Activated CD4-positive, alpha-beta T cell treated with anti-CD3 and anti-CD28 coated beads, Interleukin-2, amount 10 ng/mL, durations not matched to agents 24 days and 14 days (primary cell): ENCODE measurements at regions of chr1 and their contacts with region 1.

Region 1: DNA sequence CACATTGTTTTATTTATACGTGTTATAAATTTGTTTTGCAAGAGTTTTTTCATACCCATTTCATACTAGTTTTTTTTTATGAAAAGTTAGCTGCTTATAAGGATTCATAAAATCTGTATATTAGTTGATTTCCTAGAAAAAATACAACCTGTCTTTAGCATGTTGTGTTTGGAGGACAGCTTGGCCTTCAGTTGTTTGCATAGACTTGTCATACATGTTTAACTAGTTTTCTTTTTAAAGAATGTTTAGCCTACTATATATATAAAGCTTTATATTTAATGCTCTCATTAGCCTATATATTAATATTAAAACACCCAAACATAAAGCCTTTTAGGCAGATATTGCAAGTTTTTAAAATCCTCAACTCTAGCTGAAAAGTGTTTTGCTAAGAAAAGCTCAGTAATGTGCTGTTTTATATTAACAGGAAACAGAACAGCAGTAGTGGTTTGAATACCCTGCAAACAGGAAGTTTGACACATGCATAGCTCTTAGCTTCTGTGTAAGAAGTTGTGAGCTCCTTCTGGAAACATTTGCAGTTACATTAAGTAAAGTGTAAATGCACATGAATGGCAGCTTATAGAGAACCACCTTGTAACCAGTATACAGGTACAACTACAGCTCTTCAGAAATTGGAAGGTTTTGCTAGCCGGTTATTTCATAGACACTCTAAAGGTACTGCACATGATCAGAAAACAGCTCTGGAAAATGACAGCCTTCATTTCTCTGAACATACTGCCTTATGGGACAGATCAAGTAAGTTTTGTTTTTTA is at the start of gene PRKACB:
- DNase-seq: peak; percentile 82
- H3K4me3 Mint-ChIP-seq: peak within 1 kb of the TSS; percentile 85
- H3K27ac Mint-ChIP-seq: peak within 1 kb of the TSS; percentile 98
- H3K4me1 Mint-ChIP-seq: peaks cover 23% of the 10 kb centered on the region
- H3K27me3 Mint-ChIP-seq: no peaks in the 10 kb centered on the region
- total RNA-seq, gene PRKACB: 19.1 and 19.3 TPM in 2 replicates

Region 2: DNA sequence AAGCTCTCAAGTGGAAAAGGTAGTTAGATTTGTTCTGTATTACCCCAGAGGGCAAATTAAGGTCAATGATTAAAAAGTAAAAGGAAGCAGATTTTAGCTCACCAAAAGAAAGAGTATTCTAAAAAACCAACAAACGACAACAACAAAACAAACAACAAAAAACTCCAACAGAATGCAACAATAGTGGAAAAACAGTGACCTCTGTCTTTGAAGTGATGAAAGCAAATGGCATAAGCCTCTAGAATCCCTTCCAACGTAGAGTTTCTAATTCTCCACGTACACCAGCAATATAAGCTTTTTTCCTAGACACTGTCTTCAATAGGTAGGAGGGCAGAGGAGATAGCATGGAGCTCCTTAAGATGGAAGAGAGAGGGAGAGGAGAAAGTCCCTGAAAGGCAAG is 504.2 kb before region 1 on chr1:
- intact Hi-C with region 1: no loop called
- DNase-seq: no peak
- H3K4me3 Mint-ChIP-seq: no peak overlapping the region
- H3K27ac Mint-ChIP-seq: no peak overlapping the region
- H3K4me1 Mint-ChIP-seq: peaks cover 11% of the 10 kb centered on the region
- H3K27me3 Mint-ChIP-seq: no peaks in the 10 kb centered on the region

Region 3: GRCh38 chr1:84155517-84155916 is 11.5 kb after region 1 on chr1:
- intact Hi-C with region 1: loop called (anchors 1 kb)
- DNase-seq: no peak
- H3K4me3 Mint-ChIP-seq: peak overlapping the region; percentile 26
- H3K27ac Mint-ChIP-seq: peak overlapping the region; percentile 49
- H3K4me1 Mint-ChIP-seq: peaks cover 47% of the 10 kb centered on the region
- H3K27me3 Mint-ChIP-seq: no peaks in the 10 kb centered on the region

Region 4: GRCh38 chr1:84433258-84434080 is 289.5 kb after region 1 on chr1:
- intact Hi-C with region 1: loop called (anchors 1 kb)
- DNase-seq: peak; percentile 90
- H3K4me3 Mint-ChIP-seq: peak overlapping the region; percentile 63
- H3K27ac Mint-ChIP-seq: peak overlapping the region; percentile 40
- H3K4me1 Mint-ChIP-seq: peaks cover 6% of the 10 kb centered on the region
- H3K27me3 Mint-ChIP-seq: peaks cover 2% of the 10 kb centered on the region

Region 5: GRCh38 chr1:84541679-84542078 is 397.7 kb after region 1 on chr1:
- intact Hi-C with region 1: loop called (anchors 1 kb)
- DNase-seq: no peak
- H3K4me3 Mint-ChIP-seq: no peak overlapping the region
- H3K27ac Mint-ChIP-seq: no peak overlapping the region
- H3K4me1 Mint-ChIP-seq: peaks cover 32% of the 10 kb centered on the region
- H3K27me3 Mint-ChIP-seq: no peaks in the 10 kb centered on the region

Region 6: DNA sequence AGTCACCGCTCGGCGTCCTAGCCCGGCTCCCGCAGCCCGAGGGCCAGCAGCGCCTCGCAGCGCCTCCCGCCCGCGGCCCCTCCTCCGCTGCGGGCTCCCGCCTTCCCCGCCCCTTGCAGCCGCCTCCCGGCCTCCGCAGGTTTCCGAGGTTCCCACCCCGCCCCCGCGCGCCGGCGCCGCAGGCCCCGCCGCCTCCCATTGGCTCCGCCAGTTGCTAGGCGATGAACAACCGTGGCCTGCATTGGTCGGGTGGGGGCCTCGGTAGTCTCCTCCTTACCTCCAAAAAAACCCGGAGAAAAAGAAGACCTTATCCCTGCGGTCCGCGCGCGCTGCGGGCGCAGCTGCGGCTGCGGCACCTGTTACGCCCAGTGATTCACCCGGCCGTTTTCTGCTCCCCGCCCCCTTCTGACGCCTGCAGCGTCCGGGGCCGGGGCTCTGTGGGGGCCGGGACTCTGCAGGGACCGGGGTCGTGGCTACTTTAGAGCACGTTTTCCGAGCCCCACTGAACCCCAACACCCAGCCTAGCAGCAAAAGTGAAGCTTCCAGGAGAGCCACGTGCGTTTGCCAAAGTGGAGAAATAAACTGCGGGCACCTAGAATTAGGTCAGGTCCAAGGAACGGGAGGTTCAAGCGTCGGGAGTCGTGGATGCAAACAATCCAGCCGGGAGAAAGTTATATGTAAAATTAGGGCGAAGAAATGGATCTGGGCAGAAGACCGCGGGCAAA is 546.6 kb after region 1 on chr1 and contains the start of gene SSX2IP:
- intact Hi-C with region 1: loop called (anchors 1 kb)
- DNase-seq: peak; percentile 100
- H3K4me3 Mint-ChIP-seq: peak within 1 kb of the TSS; percentile 98
- H3K27ac Mint-ChIP-seq: peak within 1 kb of the TSS; percentile 95
- H3K4me1 Mint-ChIP-seq: peaks cover 43% of the 10 kb centered on the region
- H3K27me3 Mint-ChIP-seq: peaks cover 4% of the 10 kb centered on the region
- total RNA-seq, gene SSX2IP: 10.0 and 11.8 TPM in 2 replicates

Region 7: DNA sequence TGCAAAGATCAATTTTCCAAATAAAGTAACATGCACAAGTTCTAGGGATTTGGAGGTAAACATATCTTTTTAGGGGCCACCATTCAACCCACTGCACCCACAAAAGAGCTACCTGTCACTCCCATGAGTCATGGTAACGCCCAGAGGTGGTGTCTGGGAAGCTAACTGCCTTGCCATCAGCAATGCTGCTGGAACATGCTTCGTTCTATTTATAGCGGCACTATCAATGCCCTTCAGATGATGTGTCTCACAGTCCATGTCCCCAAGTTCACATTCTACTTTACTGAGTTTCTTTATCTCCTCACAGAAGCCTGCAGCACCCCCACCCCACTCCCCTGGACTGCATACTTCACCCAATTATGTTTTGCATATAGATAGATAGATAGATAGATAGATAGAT is 653.6 kb after region 1 on chr1:
- intact Hi-C with region 1: no loop called
- DNase-seq: no peak
- H3K4me3 Mint-ChIP-seq: no peak overlapping the region
- H3K27ac Mint-ChIP-seq: no peak overlapping the region
- H3K4me1 Mint-ChIP-seq: peaks cover 2% of the 10 kb centered on the region
- H3K27me3 Mint-ChIP-seq: peaks cover 21% of the 10 kb centered on the region

Region 8: GRCh38 chr1:84862810-84863251 is 718.9 kb after region 1 on chr1:
- intact Hi-C with region 1: loop called (anchors 10 kb)
- DNase-seq: peak; percentile 91
- H3K4me3 Mint-ChIP-seq: peak overlapping the region; percentile 74
- H3K27ac Mint-ChIP-seq: peak overlapping the region; percentile 83
- H3K4me1 Mint-ChIP-seq: peaks cover 43% of the 10 kb centered on the region
- H3K27me3 Mint-ChIP-seq: peaks cover 1% of the 10 kb centered on the region

Region 9: DNA sequence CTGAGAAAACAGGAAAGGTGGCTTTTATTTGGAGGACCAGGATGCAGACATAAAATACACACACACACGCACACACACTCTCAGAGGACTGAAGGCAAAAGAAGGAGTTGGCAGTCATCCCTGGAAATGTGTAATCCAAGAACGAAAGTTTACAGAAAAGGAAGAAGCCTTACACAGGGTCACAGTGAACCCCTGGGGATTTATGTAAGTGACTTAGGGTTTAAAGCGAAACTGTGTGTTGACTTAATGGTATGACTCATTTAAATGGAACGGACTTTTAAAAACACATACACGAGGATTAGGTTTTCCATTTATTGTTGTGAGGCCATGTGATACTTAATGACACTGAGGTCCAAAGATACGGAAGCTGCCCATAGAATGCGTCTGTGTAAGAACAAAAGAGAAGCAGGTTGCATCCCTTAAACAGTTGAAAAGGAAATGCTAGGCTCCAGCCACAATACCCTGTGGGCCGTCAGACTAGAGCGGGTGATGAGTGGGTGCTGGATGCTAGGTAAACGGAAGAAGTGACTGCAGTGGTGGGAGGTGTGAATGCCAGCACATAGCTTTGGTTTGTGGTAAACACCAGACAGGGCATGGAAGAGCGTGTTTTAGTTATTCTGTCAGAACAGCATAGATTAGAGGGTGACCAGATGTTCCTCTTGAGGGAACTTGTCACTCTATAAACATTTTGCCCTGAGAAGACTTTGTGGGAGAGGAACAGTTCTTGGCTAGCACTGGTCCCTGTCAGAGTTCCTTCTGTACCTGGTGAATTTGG is 1154.1 kb after region 1 on chr1:
- intact Hi-C with region 1: loop called (anchors 10 kb)
- DNase-seq: peak; percentile 82
- H3K4me3 Mint-ChIP-seq: peak overlapping the region; percentile 56
- H3K27ac Mint-ChIP-seq: peak overlapping the region; percentile 86
- H3K4me1 Mint-ChIP-seq: peaks cover 25% of the 10 kb centered on the region
- H3K27me3 Mint-ChIP-seq: peaks cover 49% of the 10 kb centered on the region